IMR-90 (cell line): ENCODE measurements at regions of chr4 and their contacts with region 1.

Region 1: DNA sequence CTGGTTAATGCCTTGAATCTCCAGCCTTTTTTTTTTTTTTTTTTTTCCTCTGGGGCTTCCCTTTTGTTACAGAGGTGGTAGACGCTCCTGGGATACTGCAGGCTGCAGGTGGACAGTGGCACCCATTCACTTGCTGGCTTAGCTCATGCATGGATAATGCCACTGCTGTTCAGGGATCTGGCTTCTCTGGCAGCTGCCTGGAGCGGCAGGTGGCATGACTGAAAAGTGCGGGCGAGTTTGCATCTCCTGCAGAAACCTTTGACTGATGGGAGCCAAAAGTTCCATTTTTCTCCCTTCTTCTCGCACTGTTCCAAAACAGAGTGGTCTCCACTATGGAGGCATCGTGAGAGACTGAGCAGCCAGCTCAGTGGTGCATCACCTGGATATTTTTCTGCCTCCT is 5.9 kb upstream of the STIM2 start:
- DNase-seq: no peak
- ATAC-seq: no peak
- H3K4me3 ChIP-seq: no peak overlapping the region
- H3K27ac ChIP-seq: no peak overlapping the region
- H3K4me1 ChIP-seq: peaks cover 6% of the 10 kb centered on the region; the same call in 1 of the 2 replicates
- H3K27me3 ChIP-seq: no peaks in the 10 kb centered on the region
- CTCF ChIP-seq: no peak
- POLR2A ChIP-seq: no peak
- RAD21 ChIP-seq: no peak

Region 2: GRCh38 chr4:25448379-25449109 is 1406.2 kb before region 1 on chr4:
- CTCF ChIA-PET with region 1: no interaction called
- POLR2A ChIA-PET with region 1: interaction called, 10 read pairs
- dilution Hi-C with region 1: no loop called
- in situ Hi-C with region 1: no loop called
- intact Hi-C with region 1: no loop called
- DNase-seq: peak; percentile 42
- ATAC-seq: peak; percentile 57
- H3K4me3 ChIP-seq: no peak overlapping the region
- H3K27ac ChIP-seq: no peak overlapping the region
- H3K4me1 ChIP-seq: no peaks in the 10 kb centered on the region
- H3K27me3 ChIP-seq: peaks cover 23% of the 10 kb centered on the region
- CTCF ChIP-seq: no peak
- POLR2A ChIP-seq: no peak
- RAD21 ChIP-seq: no peak

Region 3: GRCh38 chr4:26731351-26732035 is 123.2 kb before region 1 on chr4:
- CTCF ChIA-PET with region 1: no interaction called
- POLR2A ChIA-PET with region 1: no interaction called
- dilution Hi-C with region 1: no loop called
- in situ Hi-C with region 1: no loop called
- intact Hi-C with region 1: loop called (anchors 1 kb)
- DNase-seq: peak; percentile 41
- ATAC-seq: peak; percentile 32; the same call in 1 of the 2 replicates
- H3K4me3 ChIP-seq: no peak overlapping the region
- H3K27ac ChIP-seq: no peak overlapping the region
- H3K4me1 ChIP-seq: peaks cover 3% of the 10 kb centered on the region; the same call in 1 of the 2 replicates
- H3K27me3 ChIP-seq: no peaks in the 10 kb centered on the region
- CTCF ChIP-seq: no peak
- POLR2A ChIP-seq: no peak
- RAD21 ChIP-seq: no peak